ENCODE measurements at regions of chr20 and their contacts with region 1.

Region 1: DNA sequence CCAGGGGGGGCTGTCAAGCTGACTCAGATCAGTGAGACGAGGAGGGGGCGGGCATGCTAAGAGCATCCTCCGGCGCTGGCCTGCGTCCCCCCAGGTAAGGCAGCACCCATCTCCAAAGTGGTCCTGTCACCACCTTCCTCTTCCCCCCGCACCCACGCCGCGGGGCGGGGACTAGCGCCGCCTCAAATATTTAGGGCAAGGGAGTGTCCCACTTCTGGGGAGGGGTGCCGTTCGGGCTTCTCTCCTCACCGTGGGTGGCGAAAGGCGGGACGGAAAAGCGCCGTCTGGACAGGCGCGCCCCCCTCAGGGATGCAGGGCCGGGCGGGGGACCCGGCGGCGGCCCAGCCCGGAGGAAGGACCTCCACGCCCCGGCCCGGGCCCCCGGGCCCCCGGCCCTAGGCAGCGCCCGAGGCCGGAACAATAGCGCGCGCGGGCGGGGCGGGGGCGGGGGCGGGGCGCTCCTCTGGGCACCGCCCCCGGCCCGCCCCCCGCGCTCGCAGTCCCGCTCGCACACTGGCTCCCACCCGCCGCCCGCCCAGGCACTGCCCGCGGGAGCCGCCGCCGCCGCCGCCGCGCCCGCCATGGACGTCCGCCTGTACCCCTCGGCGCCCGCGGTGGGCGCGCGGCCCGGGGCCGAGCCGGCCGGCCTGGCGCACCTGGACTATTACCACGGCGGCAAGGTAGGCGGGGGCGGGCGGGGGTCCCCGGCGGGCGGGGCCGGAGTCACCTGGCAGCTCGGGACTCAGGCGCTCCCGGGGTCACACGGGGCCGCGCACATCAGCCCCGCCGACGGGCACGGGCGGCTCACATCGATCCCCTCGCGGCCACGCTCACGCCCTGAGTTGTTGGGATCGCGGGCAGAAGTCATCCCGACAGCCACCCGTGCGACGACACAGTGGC is at the start of gene TOX2:
- DNase-seq: peak; percentile 50
- ATAC-seq: peak; percentile 69
- H3K4me3 Mint-ChIP-seq: peak within 1 kb of the TSS; percentile 82
- H3K27ac Mint-ChIP-seq: peak within 1 kb of the TSS; percentile 54
- H3K4me1 Mint-ChIP-seq: peaks cover 43% of the 10 kb centered on the region
- H3K27me3 Mint-ChIP-seq: peaks cover 27% of the 10 kb centered on the region
- CTCF ChIP-seq: no peak
- total RNA-seq, gene TOX2: 4.8 and 5.0 TPM in 2 replicates

Region 2: GRCh38 chr20:43583982-43584432 is 330.6 kb before region 1 on chr20:
- CTCF ChIA-PET with region 1: no interaction called
- POLR2A ChIA-PET with region 1: no interaction called
- intact Hi-C with region 1: no loop called
- DNase-seq: no peak
- ATAC-seq: no peak
- H3K4me3 Mint-ChIP-seq: no peak overlapping the region
- H3K27ac Mint-ChIP-seq: no peak overlapping the region
- H3K4me1 Mint-ChIP-seq: no peaks in the 10 kb centered on the region
- H3K27me3 Mint-ChIP-seq: peaks cover 2% of the 10 kb centered on the region
- CTCF ChIP-seq: no peak

Region 3: GRCh38 chr20:43824309-43825050 is 90.1 kb before region 1 on chr20:
- CTCF ChIA-PET with region 1: no interaction called
- POLR2A ChIA-PET with region 1: no interaction called
- intact Hi-C with region 1: no loop called
- DNase-seq: no peak
- ATAC-seq: no peak
- H3K4me3 Mint-ChIP-seq: no peak overlapping the region
- H3K27ac Mint-ChIP-seq: no peak overlapping the region
- H3K4me1 Mint-ChIP-seq: peaks cover 7% of the 10 kb centered on the region
- H3K27me3 Mint-ChIP-seq: peaks cover 8% of the 10 kb centered on the region
- CTCF ChIP-seq: no peak

Region 4: GRCh38 chr20:43949741-43950618 is 35.4 kb after region 1 on chr20:
- CTCF ChIA-PET with region 1: no interaction called
- POLR2A ChIA-PET with region 1: no interaction called
- intact Hi-C with region 1: loop called (anchors 2 kb)
- DNase-seq: no peak
- ATAC-seq: peak; percentile 66
- H3K4me3 Mint-ChIP-seq: no peak overlapping the region
- H3K27ac Mint-ChIP-seq: no peak overlapping the region
- H3K4me1 Mint-ChIP-seq: peaks cover 28% of the 10 kb centered on the region
- H3K27me3 Mint-ChIP-seq: no peaks in the 10 kb centered on the region
- CTCF ChIP-seq: no peak

Region 5: GRCh38 chr20:43975096-43975768 is 60.7 kb after region 1 on chr20:
- CTCF ChIA-PET with region 1: no interaction called
- POLR2A ChIA-PET with region 1: no interaction called
- intact Hi-C with region 1: no loop called
- DNase-seq: no peak
- ATAC-seq: no peak
- H3K4me3 Mint-ChIP-seq: no peak overlapping the region
- H3K27ac Mint-ChIP-seq: no peak overlapping the region
- H3K4me1 Mint-ChIP-seq: no peaks in the 10 kb centered on the region
- H3K27me3 Mint-ChIP-seq: peaks cover 5% of the 10 kb centered on the region
- CTCF ChIP-seq: no peak